ENCODE measurements at regions of chr12 and their contacts with region 1.

Region 1: DNA sequence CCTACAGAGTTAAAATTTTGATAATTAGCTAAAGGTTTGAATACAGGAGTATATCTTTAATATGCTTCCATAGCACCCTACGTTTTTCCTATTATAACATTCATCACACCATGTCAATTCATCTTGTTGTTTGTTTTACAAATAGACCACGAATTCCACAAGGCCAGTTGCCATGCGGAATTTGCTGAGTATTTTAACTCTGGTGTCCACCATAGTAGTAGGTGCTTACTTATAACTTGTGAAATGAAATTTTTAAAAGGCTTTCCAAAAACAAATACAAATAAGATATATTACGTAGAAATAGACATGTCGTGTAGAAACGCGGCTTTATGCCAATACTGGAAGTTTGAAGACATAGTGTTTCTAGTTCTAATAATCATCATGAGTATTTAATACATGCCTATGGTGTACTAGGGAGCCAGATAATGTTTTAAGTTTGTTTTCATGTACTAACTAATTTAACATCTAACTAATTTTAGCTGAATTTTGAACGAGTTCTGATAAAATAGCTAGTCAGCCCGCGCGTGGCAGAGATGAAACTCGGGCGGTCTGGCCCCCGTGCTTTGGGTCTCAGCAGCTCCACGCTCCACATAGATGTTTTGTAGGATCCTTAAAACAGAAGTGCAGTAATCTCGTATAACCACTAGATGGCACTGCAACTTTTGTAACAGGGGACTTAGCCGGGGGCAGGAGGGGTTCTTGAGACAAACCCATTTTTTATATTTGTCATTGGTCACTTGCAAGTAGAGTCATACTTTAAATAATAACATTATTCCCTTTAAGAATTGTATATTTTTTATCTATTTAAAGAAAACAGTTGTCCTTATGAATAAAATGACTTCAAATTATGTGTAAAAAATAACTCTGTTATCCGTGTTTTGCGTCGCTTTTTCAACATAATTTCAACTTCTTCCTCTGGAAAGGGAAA is 10.2 kb downstream of the CD69 start:
- DNase-seq: peak; percentile 33
- ATAC-seq: peak; percentile 88 to 89

Region 2: GRCh38 chr12:9687228-9687627 is 63.3 kb before region 1 on chr12:
- intact Hi-C with region 1: no loop called
- DNase-seq: no peak
- ATAC-seq: no peak

Region 3: DNA sequence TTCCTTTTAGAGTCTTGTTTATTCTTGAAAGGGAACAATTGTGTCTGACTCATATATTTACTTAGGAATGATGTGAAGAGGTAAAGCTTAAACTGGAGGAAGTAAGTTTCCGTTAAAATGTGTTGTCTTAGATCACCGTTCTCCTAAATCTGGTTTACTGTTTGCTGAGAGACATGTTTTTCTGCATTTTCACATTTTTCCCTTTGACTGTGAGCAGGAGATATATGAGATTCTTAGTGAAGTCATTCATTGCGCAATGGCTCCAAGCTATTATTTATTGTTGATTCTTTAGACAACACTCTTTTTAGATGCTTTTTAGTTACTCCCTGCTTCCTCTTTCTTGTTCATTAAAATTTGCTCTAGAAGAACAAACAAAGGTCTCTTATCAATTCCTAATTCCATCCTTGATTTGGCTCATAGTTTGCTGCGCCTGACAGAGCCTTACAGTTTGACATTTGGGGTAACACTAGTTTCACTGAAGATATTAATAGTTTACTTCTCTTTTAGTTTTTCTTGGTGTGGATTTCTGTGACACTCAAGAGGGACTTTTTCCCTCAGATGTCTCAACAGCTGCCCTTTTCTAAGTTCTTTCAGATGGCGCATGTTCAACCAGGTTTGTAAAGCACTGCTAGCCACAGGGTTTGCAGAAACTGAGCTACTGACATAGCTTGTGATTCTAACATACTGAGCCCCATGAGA is 29.0 kb before region 1 on chr12:
- intact Hi-C with region 1: no loop called
- DNase-seq: no peak
- ATAC-seq: no peak

Region 4: GRCh38 chr12:9797722-9798619 is 47.4 kb after region 1 on chr12:
- intact Hi-C with region 1: loop called in 1 of 2 experiments (anchors 5 kb)
- DNase-seq: no peak
- ATAC-seq: peak; percentile 77 to 82

Region 5: GRCh38 chr12:9910716-9911421 is 160.3 kb after region 1 on chr12:
- intact Hi-C with region 1: loop called in 1 of 2 experiments (anchors 10 kb)
- DNase-seq: no peak
- ATAC-seq: no peak

Region 6: GRCh38 chr12:9925708-9926393 is 175.3 kb after region 1 on chr12:
- intact Hi-C with region 1: loop called in 1 of 2 experiments (anchors 2 kb)
- DNase-seq: no peak
- ATAC-seq: peak; percentile 38 to 58

Region 7: DNA sequence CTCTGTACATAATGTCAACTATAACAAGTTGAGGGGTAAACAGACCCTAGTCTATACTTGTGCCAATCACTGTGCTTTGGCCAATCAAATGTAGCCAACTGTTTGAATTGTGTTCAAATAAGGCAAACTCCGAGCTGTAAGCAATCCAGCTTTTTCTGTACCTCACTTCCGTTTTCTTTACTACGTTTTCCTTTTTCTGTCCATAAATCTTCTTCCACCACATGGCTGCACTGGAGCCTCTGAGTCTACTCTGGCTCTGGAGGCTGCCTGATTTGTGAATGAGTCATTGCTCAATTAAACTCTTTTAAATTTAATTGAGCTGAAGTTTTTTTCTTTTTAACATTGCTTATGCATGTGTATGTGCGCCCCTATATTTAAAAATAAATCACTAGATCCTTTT is 318.6 kb after region 1 on chr12:
- intact Hi-C with region 1: no loop called
- DNase-seq: no peak
- ATAC-seq: peak in 1 of 2 donors; percentile 54